ENCODE measurements at regions of chr3 and their contacts with region 1.

Region 1: GRCh38 chr3:120831066-120831465 is 76.9 kb upstream of the STXBP5L start:
- DNase-seq: no peak
- H3K4me3 ChIP-seq: no peak overlapping the region
- H3K4me3 Mint-ChIP-seq: no peak overlapping the region
- H3K27ac ChIP-seq: no peak overlapping the region
- H3K27ac Mint-ChIP-seq: no peak overlapping the region
- H3K4me1 ChIP-seq: no peaks in the 10 kb centered on the region
- H3K4me1 Mint-ChIP-seq: no peaks in the 10 kb centered on the region
- H3K27me3 ChIP-seq: no peaks in the 10 kb centered on the region
- H3K27me3 Mint-ChIP-seq: peaks cover 8 to 10% of the 10 kb centered on the region in 2 donors

Region 2: DNA sequence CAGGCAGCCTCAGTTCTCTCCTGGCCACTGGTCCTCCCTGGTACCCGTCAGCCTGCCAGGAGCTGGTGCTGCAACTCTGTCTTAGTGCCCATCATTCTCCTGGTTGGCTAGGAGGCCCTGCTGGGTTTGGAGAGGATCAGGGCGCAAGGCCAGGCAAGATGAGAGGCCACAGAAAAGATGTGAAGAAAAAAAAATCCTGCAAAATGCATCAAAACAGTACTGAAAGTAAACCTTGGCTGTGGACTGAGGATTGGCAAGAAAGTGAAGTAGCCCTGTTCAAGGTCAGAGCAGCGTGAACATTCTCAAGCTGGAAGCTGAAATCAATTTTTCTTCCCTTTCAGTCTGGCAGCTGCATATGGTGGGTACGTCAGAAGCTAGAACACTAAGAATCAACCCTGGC is 14.3 kb before region 1 on chr3:
- CTCF ChIA-PET with region 1: no interaction called
- POLR2A ChIA-PET with region 1: no interaction called
- intact Hi-C with region 1: no loop called
- DNase-seq: no peak
- H3K4me3 ChIP-seq: no peak overlapping the region
- H3K4me3 Mint-ChIP-seq: no peak overlapping the region
- H3K27ac ChIP-seq: no peak overlapping the region
- H3K27ac Mint-ChIP-seq: no peak overlapping the region
- H3K4me1 ChIP-seq: no peaks in the 10 kb centered on the region
- H3K4me1 Mint-ChIP-seq: no peaks in the 10 kb centered on the region
- H3K27me3 ChIP-seq: no peaks in the 10 kb centered on the region
- H3K27me3 Mint-ChIP-seq: peaks cover 4 to 17% of the 10 kb centered on the region in 2 donors

Region 3: DNA sequence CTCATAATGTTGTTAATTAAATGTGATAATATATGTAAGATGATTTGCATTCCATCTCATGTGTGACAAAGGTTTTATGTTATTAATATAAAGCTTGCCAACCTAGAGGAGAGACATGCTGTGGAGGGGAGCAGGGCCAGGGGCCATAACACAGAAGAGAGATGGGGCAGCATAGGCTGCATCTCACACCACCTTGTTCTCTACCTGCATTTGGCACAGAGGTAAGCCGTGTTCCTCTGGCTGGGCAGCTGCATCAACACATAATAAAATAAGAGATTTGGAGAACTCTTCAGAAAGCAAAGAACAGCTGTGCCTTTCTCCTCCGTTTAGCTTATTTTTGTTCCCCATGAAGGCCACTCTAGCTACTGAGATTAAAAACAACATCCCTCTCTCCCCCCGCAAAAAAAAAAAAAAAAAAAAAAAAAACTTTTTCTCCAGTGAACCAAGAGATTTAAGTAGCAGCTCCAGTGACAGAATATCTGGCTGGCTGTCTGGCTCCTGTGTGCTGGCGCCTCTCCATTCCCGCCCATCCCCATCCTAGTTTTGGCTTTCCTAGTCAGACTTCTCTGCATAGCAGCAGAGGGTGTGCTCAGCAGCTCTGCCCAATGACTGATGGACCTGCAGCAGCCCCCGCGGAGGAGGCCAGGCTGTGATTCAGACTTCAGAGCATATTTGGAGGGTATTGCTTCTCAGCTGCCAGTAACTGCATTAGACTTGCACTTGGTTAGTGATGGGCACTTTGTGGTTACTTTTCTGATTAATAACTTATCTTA is 24.8 kb after region 1 on chr3:
- CTCF ChIA-PET with region 1: no interaction called
- POLR2A ChIA-PET with region 1: no interaction called
- intact Hi-C with region 1: loop called (anchors 1 kb)
- DNase-seq: no peak
- H3K4me3 ChIP-seq: no peak overlapping the region
- H3K4me3 Mint-ChIP-seq: no peak overlapping the region
- H3K27ac ChIP-seq: no peak overlapping the region
- H3K27ac Mint-ChIP-seq: no peak overlapping the region
- H3K4me1 ChIP-seq: no peaks in the 10 kb centered on the region
- H3K4me1 Mint-ChIP-seq: no peaks in the 10 kb centered on the region
- H3K27me3 ChIP-seq: no peaks in the 10 kb centered on the region
- H3K27me3 Mint-ChIP-seq: peaks cover 7% of the 10 kb centered on the region in 2 donors

Measured in CD4-positive, alpha-beta memory T cell (primary cell).